ENCODE measurements at regions of chr4 and their contacts with region 1.

Region 1: GRCh38 chr4:88646528-88647280 is 50.9 kb downstream of the NAP1L5 start:
- DNase-seq: no peak
- ATAC-seq: no peak
- H3K4me3 ChIP-seq: no peak overlapping the region
- H3K27ac ChIP-seq: no peak overlapping the region
- H3K4me1 ChIP-seq: peaks cover 8% of the 10 kb centered on the region
- H3K27me3 ChIP-seq: no peaks in the 10 kb centered on the region

Region 2: GRCh38 chr4:88567591-88567990 is 79.1 kb before region 1 on chr4:
- intact Hi-C with region 1: no loop called
- DNase-seq: no peak
- ATAC-seq: no peak
- H3K4me3 ChIP-seq: no peak overlapping the region
- H3K27ac ChIP-seq: no peak overlapping the region
- H3K4me1 ChIP-seq: no peaks in the 10 kb centered on the region
- H3K27me3 ChIP-seq: no peaks in the 10 kb centered on the region

Region 3: DNA sequence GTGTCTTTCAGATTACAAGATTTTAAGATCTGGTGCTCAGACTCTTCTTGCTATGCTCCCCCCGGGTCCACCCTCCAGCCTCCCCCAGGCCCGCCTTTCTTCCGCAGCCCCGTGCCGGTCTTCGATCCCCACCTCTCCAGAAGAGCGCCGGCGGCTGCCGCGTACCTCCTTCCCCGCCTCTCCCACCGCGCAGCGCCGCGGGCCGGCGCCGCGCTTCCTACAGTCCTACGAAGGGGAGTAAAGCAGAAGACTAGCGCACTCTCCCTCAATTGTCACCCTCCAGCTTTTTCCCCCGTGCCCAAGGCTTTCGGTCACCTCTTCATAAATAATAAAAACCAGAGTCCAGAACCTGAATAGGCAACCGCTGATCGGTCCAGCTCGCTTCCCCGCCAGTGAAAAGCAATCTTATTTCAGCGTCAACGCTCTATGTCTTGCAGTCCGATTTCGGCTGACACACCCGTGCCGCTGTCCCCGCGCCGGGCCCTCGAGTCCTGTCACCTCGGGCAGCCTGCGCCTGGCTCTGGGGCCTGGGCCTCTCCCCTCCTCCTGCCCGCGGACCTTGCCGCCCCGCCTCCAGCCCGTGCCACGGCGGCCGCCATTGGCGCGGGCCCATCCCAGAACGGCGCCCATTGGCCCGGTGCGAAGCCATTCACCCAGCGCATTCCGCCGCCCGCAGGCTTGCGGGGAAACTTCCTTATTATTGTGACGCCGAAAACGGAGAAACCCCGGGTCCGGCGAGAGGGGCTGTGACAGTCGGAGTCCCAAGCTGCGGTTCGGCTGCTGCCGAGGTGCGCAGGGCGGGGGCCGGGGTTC is 54.7 kb before region 1 on chr4 and contains the start of gene HERC3:
- intact Hi-C with region 1: loop called in 1 of 4 experiments (anchors 5 kb)
- DNase-seq: peak; percentile 91 to 98 (median 97)
- ATAC-seq: peak; percentile 99
- H3K4me3 ChIP-seq: peak within 1 kb of the TSS; percentile 76
- H3K27ac ChIP-seq: peak within 1 kb of the TSS; percentile 76
- H3K4me1 ChIP-seq: no peaks in the 10 kb centered on the region
- H3K27me3 ChIP-seq: no peaks in the 10 kb centered on the region
- total RNA-seq, gene HERC3: 42.4 to 60.6 (median 50.9) TPM

Region 4: DNA sequence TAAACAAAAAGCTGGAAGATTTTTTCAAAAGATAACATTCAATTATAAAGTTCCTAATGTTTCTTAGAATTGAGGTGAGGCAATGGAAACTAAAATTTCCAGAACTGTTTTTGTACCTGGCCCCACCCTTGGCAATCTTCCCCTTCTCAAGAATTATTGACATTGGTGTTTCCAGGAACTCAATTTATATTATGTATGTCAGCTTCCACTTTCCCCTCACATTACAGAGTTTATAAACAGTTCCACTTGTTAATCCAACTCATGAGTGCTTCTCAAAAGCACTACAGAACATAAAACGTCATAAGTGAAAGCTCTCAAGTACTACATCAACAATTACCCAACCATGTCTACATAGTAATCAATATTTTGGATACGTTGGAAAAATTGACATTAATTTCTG is 302.9 kb after region 1 on chr4:
- intact Hi-C with region 1: no loop called
- DNase-seq: no peak
- ATAC-seq: no peak
- H3K4me3 ChIP-seq: no peak overlapping the region
- H3K27ac ChIP-seq: no peak overlapping the region
- H3K4me1 ChIP-seq: no peaks in the 10 kb centered on the region
- H3K27me3 ChIP-seq: no peaks in the 10 kb centered on the region

Region 5: DNA sequence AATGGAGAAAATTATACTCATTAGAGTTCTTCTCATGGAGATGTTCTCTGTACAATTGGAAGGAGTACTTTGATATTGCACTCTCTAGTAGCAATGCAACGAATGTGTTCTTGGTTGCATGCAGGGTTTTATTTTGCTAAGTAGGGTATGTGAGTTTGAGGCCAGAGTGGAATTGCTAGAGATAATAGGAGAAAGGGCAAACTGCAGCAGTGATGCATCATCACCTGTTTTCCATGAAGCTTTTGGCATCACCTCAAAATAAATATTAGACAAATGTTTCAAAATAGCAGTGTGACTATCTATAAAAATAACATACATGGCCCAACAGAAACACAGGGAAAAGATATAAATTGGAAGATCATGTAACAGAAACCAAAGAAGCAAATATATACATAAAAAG is 557.9 kb after region 1 on chr4:
- intact Hi-C with region 1: no loop called
- DNase-seq: no peak
- ATAC-seq: no peak
- H3K4me3 ChIP-seq: no peak overlapping the region
- H3K27ac ChIP-seq: no peak overlapping the region
- H3K4me1 ChIP-seq: no peaks in the 10 kb centered on the region
- H3K27me3 ChIP-seq: no peaks in the 10 kb centered on the region